Caco-2 (cell line): ENCODE measurements at regions of chr9 and their contacts with region 1.

Region 1: GRCh38 chr9:129884220-129885017 is 49.2 kb downstream of the USP20 start:
- DNase-seq: peak; percentile 89 to 90
- H3K4me3 ChIP-seq: peak overlapping the region; percentile 10; the same call in 1 of the 2 replicates
- H3K4me3 Mint-ChIP-seq: peak overlapping the region; percentile 73
- H3K27ac Mint-ChIP-seq: peak overlapping the region; percentile 70
- H3K4me1 ChIP-seq: peaks cover 18% of the 10 kb centered on the region
- H3K4me1 Mint-ChIP-seq: peaks cover 10% of the 10 kb centered on the region
- H3K27me3 ChIP-seq: no peaks in the 10 kb centered on the region
- H3K27me3 Mint-ChIP-seq: no peaks in the 10 kb centered on the region
- CTCF ChIP-seq: no peak

Region 2: GRCh38 chr9:130042833-130043653 is 158.6 kb after region 1 on chr9 and contains the start of gene FNBP1:
- CTCF ChIA-PET with region 1: no interaction called
- POLR2A ChIA-PET with region 1: no interaction called
- intact Hi-C with region 1: loop called (anchors 1 kb)
- DNase-seq: peak; percentile 82 to 86
- H3K4me3 ChIP-seq: peak within 1 kb of the TSS; percentile 87
- H3K4me3 Mint-ChIP-seq: peak within 1 kb of the TSS; percentile 99
- H3K27ac Mint-ChIP-seq: peak within 1 kb of the TSS; percentile 91
- H3K4me1 ChIP-seq: peaks cover 12% of the 10 kb centered on the region
- H3K4me1 Mint-ChIP-seq: peaks cover 13% of the 10 kb centered on the region
- H3K27me3 ChIP-seq: no peaks in the 10 kb centered on the region
- H3K27me3 Mint-ChIP-seq: no peaks in the 10 kb centered on the region
- CTCF ChIP-seq: no peak
- total RNA-seq, gene FNBP1: 33.2 and 34.3 TPM in 2 replicates

Region 3: GRCh38 chr9:130053504-130054324 is 169.3 kb after region 1 on chr9 and contains the start of gene GPR107:
- CTCF ChIA-PET with region 1: no interaction called
- POLR2A ChIA-PET with region 1: no interaction called
- intact Hi-C with region 1: loop called (anchors 1 kb)
- DNase-seq: peak; percentile 76 to 84
- H3K4me3 ChIP-seq: peak within 1 kb of the TSS; percentile 75
- H3K4me3 Mint-ChIP-seq: peak within 1 kb of the TSS; percentile 99
- H3K27ac Mint-ChIP-seq: peak within 1 kb of the TSS; percentile 96
- H3K4me1 ChIP-seq: 0 out of 2 replicates have a peak, but pooled peaks cover 3% of the 10 kb centered on the region
- H3K4me1 Mint-ChIP-seq: no peaks in the 10 kb centered on the region
- H3K27me3 ChIP-seq: no peaks in the 10 kb centered on the region
- H3K27me3 Mint-ChIP-seq: no peaks in the 10 kb centered on the region
- CTCF ChIP-seq: no peak
- total RNA-seq, gene GPR107: 49.8 and 53.1 TPM in 2 replicates

Region 4: DNA sequence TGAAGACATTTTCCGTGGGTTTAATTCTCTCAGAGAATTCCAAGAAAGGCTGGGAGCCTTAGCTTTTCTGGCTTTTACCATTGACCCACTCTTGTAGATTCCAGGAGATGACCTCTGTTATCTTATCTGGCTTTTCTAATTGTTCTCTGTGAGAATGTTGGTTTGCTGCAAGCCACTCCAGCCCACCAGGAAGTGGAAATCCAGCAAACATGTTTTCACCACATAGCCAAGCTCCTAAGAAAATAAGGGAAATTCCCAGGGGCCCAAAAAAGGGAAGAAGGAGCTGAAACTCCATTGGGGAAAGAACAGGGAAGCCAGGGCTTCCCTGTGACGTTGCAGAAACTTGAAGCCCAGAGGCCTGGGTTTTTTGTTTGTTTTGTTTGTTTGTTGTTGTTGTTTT is 189.0 kb after region 1 on chr9:
- CTCF ChIA-PET with region 1: no interaction called
- POLR2A ChIA-PET with region 1: no interaction called
- intact Hi-C with region 1: loop called (anchors 1 kb)
- DNase-seq: peak; percentile 31 to 60
- H3K4me3 ChIP-seq: no peak overlapping the region
- H3K4me3 Mint-ChIP-seq: no peak overlapping the region
- H3K27ac Mint-ChIP-seq: peak overlapping the region; percentile 77
- H3K4me1 ChIP-seq: peaks cover 24% of the 10 kb centered on the region
- H3K4me1 Mint-ChIP-seq: peaks cover 13% of the 10 kb centered on the region
- H3K27me3 ChIP-seq: no peaks in the 10 kb centered on the region
- H3K27me3 Mint-ChIP-seq: no peaks in the 10 kb centered on the region
- CTCF ChIP-seq: no peak

Region 5: DNA sequence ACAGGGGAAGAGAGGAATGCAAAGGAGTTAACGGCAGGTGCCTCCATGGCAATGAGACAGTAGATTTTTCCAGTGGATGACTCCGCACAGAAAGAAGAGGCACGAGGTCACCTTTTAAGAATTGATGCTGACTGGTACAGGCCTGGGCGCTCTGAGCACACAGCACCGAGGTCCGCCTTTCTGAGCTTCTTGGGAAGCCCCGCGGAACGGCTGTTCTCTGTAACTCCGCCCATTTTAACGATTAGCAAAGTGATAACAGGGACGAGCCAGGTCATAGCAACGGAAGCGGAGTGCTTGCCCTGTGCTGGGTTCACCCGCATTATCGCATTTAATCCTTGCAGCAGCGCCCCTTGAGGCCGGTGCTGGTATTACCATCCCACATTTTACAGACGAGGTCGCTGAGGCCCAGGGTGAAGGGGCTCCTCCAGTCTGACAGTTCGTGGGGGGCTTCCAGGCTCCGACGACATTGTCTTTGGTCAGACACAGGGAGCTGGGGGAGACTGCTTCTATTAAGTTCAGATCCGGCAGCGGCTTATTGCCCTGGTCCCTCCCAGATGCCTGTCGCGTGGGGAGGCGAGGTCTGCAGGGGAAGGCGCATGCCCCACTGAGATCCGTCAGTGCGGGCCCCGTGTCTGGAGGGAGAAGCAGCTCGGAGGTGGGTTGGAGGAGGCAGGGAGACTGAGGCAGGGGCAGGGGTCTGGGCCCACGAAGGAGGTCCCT is 358.8 kb after region 1 on chr9:
- CTCF ChIA-PET with region 1: interaction called, 5 read pairs
- POLR2A ChIA-PET with region 1: no interaction called
- intact Hi-C with region 1: loop called (anchors 10 kb)
- DNase-seq: peak; percentile 83 to 84
- H3K4me3 ChIP-seq: no peak overlapping the region
- H3K4me3 Mint-ChIP-seq: peak overlapping the region; percentile 60
- H3K27ac Mint-ChIP-seq: no peak overlapping the region
- H3K4me1 ChIP-seq: no peaks in the 10 kb centered on the region; the same call in 1 of the 2 replicates
- H3K4me1 Mint-ChIP-seq: no peaks in the 10 kb centered on the region
- H3K27me3 ChIP-seq: no peaks in the 10 kb centered on the region
- H3K27me3 Mint-ChIP-seq: no peaks in the 10 kb centered on the region
- CTCF ChIP-seq: peak; percentile 84 to 95